Activated T-helper 1 cell treated with anti-CD3 and anti-CD28 coated beads, Interleukin-12 subunit alpha, Interleukin-12 subunit beta, Interleukin-2, Interleukin-4 antibody, amounts not matched to agents 30 ng/mL and 10 ng/mL and 1 ng/mL, durations not matched to agents 14 hours and 24 hours and 36 hours (primary cell): ENCODE measurements at regions of chr7 and their contacts with region 1.

Region 1: DNA sequence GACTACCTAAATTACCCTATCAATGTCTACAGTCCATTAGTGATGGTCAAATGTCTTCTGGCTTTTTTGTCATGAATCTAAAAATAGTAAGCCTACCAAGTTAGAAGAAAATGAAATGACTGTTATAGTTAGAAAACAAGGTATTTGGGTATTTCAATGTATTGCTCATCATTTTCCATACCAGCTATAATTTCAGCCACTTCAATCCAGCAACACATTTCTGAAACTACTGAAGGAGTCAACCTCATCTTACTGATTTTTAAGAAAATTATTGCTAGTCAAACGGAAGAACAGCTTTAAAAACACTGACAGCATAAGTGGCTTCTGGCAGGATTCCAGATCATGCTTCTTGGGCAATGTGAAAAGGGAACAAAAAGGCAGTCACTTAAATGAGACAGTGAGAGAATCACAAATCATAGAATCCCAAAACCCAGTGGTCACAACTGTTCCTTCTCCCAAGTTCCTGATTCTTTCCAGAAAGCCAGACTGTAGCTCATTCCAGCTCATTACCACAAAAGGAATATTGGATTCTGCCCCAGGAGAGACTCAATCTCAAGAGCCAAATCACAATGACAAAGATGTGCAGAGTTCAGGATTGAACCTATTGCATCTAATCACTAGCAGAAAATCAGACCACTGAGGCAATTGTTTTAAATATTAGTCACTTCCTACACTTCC is 61.2 kb upstream of the LRRN3 start:
- DNase-seq: no peak
- H3K4me3 Mint-ChIP-seq: peak overlapping the region; percentile 68
- H3K27ac Mint-ChIP-seq: peak overlapping the region; percentile 94
- H3K4me1 Mint-ChIP-seq: peaks cover 64% of the 10 kb centered on the region
- H3K27me3 Mint-ChIP-seq: no peaks in the 10 kb centered on the region

Region 2: GRCh38 chr7:110148054-110148453 is 881.7 kb before region 1 on chr7:
- intact Hi-C with region 1: no loop called
- DNase-seq: no peak
- H3K4me3 Mint-ChIP-seq: no peak overlapping the region
- H3K27ac Mint-ChIP-seq: no peak overlapping the region
- H3K4me1 Mint-ChIP-seq: no peaks in the 10 kb centered on the region
- H3K27me3 Mint-ChIP-seq: no peaks in the 10 kb centered on the region

Region 3: GRCh38 chr7:110909117-110909516 is 120.6 kb before region 1 on chr7:
- intact Hi-C with region 1: loop called (anchors 5 kb)
- DNase-seq: no peak
- H3K4me3 Mint-ChIP-seq: no peak overlapping the region
- H3K27ac Mint-ChIP-seq: no peak overlapping the region
- H3K4me1 Mint-ChIP-seq: peaks cover 31% of the 10 kb centered on the region
- H3K27me3 Mint-ChIP-seq: no peaks in the 10 kb centered on the region

Region 4: GRCh38 chr7:110977127-110977737 is 52.5 kb before region 1 on chr7:
- intact Hi-C with region 1: loop called (anchors 1 kb)
- DNase-seq: no peak
- H3K4me3 Mint-ChIP-seq: peak overlapping the region; percentile 75
- H3K27ac Mint-ChIP-seq: peak overlapping the region; percentile 79
- H3K4me1 Mint-ChIP-seq: peaks cover 41% of the 10 kb centered on the region
- H3K27me3 Mint-ChIP-seq: no peaks in the 10 kb centered on the region

Region 5: GRCh38 chr7:111076205-111076604 is 46.5 kb after region 1 on chr7:
- intact Hi-C with region 1: loop called (anchors 1 kb)
- DNase-seq: no peak
- H3K4me3 Mint-ChIP-seq: peak overlapping the region; percentile 46
- H3K27ac Mint-ChIP-seq: peak overlapping the region; percentile 85
- H3K4me1 Mint-ChIP-seq: peaks cover 78% of the 10 kb centered on the region
- H3K27me3 Mint-ChIP-seq: no peaks in the 10 kb centered on the region

Region 6: DNA sequence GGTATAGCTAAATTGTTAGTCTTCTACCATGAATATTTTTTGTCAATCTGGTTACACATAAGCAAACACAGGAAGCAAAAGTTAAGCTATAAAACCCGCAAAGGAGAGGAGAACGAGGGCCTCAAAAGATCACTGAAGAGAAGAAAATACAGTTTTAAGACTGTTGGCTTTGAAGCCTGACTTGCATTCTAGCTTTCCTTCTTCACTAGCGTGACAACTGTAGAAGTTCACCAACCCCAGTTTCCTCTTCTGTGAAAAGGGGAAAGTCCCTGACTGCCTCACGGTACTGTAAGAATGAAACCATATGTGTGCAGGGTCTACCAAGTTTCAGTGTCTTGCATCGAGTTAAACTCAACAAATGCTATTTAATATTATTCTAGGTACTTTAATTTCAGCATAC is 53.7 kb after region 1 on chr7:
- intact Hi-C with region 1: loop called (anchors 1 kb)
- DNase-seq: peak; percentile 74
- H3K4me3 Mint-ChIP-seq: peak overlapping the region; percentile 59
- H3K27ac Mint-ChIP-seq: peak overlapping the region; percentile 82
- H3K4me1 Mint-ChIP-seq: peaks cover 84% of the 10 kb centered on the region
- H3K27me3 Mint-ChIP-seq: no peaks in the 10 kb centered on the region

Region 7: DNA sequence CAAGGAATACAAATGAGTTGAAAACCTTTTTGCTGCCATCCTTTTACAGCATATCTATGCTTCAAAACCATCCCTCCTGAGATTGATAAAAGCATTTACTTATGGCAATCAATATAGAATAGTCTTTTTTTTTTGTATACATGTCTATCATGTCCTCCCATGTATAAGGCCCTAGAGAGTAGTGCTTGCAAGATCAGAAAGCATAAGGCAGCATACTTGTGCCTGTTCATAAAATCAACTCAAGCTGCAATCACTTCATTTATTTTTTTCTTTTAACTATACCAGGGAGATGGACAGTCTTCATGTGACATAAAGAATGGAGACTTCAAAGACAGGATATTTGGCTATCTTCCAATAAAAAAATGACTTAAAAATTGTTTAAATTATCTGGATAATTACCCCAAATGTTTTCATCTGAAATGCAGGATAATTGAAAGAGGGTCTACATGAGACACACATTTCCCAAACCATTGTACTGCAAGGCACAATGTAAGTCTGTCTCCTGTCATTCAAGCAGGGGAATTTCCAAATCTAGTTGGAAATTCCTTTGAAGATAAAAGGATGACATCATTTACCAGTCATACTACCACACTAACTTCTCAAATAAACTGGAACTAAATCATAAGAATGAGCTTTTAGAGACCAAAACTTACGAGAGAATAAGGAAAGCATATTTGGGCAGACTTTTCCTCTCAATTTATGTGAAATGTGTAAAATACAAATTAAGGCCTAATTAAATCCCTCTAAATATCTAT is 83.7 kb after region 1 on chr7:
- intact Hi-C with region 1: loop called (anchors 1 kb)
- DNase-seq: no peak
- H3K4me3 Mint-ChIP-seq: peak overlapping the region; percentile 30
- H3K27ac Mint-ChIP-seq: peak overlapping the region; percentile 83
- H3K4me1 Mint-ChIP-seq: peaks cover 43% of the 10 kb centered on the region
- H3K27me3 Mint-ChIP-seq: no peaks in the 10 kb centered on the region